ENCODE measurements at regions of chr10 and their contacts with region 1.

Region 1: GRCh38 chr10:50224330-50224952 is 26.9 kb downstream of the ASAH2 start:
- H3K4me3 Mint-ChIP-seq: no peak overlapping the region
- H3K27ac Mint-ChIP-seq: no peak overlapping the region
- H3K4me1 Mint-ChIP-seq: peaks cover 9% of the 10 kb centered on the region
- H3K27me3 Mint-ChIP-seq: peaks cover 20% of the 10 kb centered on the region

Region 2: GRCh38 chr10:49594594-49594993 is 629.8 kb before region 1 on chr10:
- intact Hi-C with region 1: loop called (anchors 2 kb)
- H3K4me3 Mint-ChIP-seq: no peak overlapping the region
- H3K27ac Mint-ChIP-seq: no peak overlapping the region
- H3K4me1 Mint-ChIP-seq: peaks cover 9% of the 10 kb centered on the region
- H3K27me3 Mint-ChIP-seq: peaks cover 22% of the 10 kb centered on the region

Region 3: DNA sequence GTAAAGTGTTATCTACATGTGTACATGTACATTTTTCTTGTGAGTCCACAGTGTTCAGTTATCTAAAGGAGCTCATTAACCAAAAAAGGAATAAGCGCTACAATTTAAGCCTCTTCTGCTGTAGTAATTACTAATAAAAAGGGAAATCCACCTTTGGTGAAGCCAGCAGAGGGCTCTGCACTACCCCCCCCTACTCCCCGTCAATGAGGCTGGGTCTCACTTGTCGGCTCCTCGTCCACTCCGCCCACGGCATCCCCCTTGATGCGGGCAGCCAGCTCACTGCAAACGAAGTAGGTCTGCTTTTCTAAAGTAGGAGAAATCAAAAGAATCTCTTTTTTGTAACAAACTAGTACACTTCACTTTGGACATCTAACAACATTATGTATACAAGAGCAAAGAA is 161.3 kb before region 1 on chr10:
- intact Hi-C with region 1: no loop called
- H3K4me3 Mint-ChIP-seq: no peak overlapping the region
- H3K27ac Mint-ChIP-seq: no peak overlapping the region
- H3K4me1 Mint-ChIP-seq: no peaks in the 10 kb centered on the region
- H3K27me3 Mint-ChIP-seq: peaks cover 8% of the 10 kb centered on the region

Measured in dendritic cell treated with granulocyte-macrophage colony-stimulating factor and Interleukin-4, amounts not matched to agents 40 ng/mL and 50 ng/mL, for 4 days (primary cell).